Psoas muscle (tissue), 8 donors: ENCODE measurements at regions of chr2 and their contacts with region 1.

Region 1: DNA sequence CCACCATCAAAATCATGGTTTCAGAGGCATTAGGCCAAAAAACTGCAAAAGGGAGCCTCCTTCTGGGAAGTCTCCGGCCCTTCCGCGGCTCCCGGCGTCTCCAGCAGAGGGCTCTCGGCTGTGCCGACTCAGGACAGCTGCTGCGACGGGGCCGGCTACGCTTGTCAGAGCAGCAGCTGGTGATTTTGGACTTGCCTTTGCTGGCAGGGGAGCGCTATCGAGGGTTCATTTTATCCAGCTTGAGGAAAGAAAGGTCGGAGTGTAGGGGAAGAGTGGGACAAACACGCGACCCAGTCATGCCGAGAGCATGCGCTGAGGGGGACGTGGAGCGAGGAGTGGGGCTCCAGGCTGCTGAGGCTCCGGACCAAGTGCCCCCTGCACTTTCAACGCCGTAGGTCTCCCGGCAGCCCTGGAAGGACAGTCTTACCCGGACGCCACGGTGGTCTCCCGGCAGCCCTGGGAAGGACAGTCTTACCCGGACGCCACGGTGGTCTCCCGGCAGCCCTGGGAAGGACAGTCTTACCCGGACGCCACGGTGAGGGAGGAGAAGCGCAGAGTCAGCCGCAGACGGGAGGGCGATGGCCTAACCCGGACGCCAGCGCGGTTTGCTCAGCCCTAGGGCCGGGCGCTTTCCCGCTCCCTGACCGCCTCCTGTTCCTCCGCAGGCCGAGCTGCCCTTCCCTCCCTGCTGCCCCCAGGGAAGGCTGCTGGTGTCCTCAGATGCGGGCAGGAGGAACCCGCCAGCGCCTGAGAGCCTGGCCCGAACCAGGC is 21.7 kb downstream of the DDX18 start:
- DNase-seq: peak; percentile 86 to 90
- ATAC-seq: peak; percentile 91 to 98 (median 96)
- H3K4me3 ChIP-seq: peak overlapping the region; percentile 63
- H3K27ac ChIP-seq: peak overlapping the region; percentile 53
- H3K4me1 ChIP-seq: no peaks in the 10 kb centered on the region
- H3K27me3 ChIP-seq: no peaks in the 10 kb centered on the region
- CTCF ChIP-seq: peak; percentile 74

Region 2: DNA sequence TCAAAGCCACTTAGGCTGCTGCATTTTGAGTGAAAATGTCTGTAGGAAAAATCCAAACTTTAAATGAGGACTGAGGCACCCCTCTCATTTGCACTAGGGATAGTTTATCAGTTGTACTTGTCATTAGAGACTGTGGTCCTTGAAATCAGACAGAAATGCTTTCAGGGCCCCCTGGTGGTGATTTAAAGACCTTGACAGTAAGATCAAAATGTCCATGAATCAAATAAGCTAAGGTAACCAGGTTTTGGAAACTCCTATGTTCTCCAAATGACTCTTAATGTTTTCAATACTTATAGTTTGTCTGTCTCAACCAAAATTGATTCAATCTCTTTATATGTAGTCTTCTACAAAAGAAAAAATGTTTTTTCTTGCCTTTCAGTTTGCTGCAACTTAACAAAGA is 50.4 kb before region 1 on chr2:
- intact Hi-C with region 1: no loop called
- DNase-seq: no peak
- ATAC-seq: no peak
- H3K4me3 ChIP-seq: no peak overlapping the region
- H3K27ac ChIP-seq: no peak overlapping the region
- H3K4me1 ChIP-seq: no peaks in the 10 kb centered on the region
- H3K27me3 ChIP-seq: no peaks in the 10 kb centered on the region
- CTCF ChIP-seq: peak; percentile 46

Region 3: DNA sequence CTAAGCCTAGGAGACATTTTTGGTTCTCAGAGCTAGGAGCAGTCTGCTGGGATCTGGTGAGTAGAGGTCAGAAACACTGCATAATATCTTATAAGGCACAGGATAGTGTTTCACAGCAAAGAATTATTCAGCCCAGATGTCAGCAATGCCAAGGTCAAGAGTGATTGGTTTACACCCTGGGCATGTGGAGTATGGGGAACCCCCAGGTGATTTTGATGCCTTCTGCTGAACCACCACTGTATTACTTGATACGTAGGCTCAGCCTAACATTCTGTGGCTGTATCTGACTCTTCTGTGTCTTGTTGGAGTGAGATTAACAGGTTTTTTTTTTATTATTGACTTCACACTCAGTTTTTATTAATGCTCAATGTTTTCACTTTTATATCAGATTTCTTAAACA is 15.7 kb before region 1 on chr2:
- intact Hi-C with region 1: no loop called
- DNase-seq: no peak
- ATAC-seq: no peak
- H3K4me3 ChIP-seq: no peak overlapping the region
- H3K27ac ChIP-seq: no peak overlapping the region
- H3K4me1 ChIP-seq: peaks cover 18% of the 10 kb centered on the region
- H3K27me3 ChIP-seq: no peaks in the 10 kb centered on the region
- CTCF ChIP-seq: no peak

Region 4: DNA sequence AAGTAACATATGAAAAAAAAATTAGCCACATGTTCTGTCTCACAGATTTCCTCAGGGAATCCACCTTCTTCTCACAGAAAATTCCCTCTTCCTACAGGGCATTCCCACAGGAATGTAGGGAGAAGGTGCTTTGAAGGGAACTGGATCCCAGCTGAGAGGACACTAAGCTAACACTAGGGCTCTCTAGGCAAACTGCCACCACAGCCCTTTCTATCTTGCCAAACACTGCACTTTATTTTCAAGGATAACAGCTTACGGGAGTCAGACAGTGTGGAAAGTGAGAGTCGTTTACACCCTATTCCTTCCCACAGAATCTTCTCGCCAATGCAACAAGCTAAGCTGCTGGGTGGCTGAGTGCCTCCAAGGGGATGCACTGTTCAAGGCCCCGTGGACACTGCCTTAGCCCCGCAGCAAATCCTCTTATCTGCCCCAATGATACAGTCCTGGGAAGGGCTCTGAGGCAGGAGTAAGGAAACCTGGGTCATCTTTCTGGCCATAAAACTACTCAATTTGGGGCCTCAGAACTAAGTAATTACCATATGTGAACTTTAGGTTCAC is 100.8 kb after region 1 on chr2:
- intact Hi-C with region 1: loop called in 1 of 2 experiments (anchors 10 kb)
- DNase-seq: no peak
- ATAC-seq: peak in 3 of 4 donors; percentile 46 to 87 (median 79)
- H3K4me3 ChIP-seq: no peak overlapping the region
- H3K27ac ChIP-seq: no peak overlapping the region
- H3K4me1 ChIP-seq: peaks cover 21% of the 10 kb centered on the region
- H3K27me3 ChIP-seq: no peaks in the 10 kb centered on the region
- CTCF ChIP-seq: no peak

Region 5: GRCh38 chr2:118003396-118003824 is 167.2 kb after region 1 on chr2:
- intact Hi-C with region 1: loop called (anchors 2 to 5 kb)
- DNase-seq: no peak
- ATAC-seq: peak; percentile 76 to 99 (median 88)
- H3K4me3 ChIP-seq: no peak overlapping the region
- H3K27ac ChIP-seq: no peak overlapping the region
- H3K4me1 ChIP-seq: peaks cover 5% of the 10 kb centered on the region
- H3K27me3 ChIP-seq: no peaks in the 10 kb centered on the region
- CTCF ChIP-seq: peak; percentile 79